Head of caudate nucleus (tissue), 42 donors: ENCODE measurements at regions of chr20 and their contacts with region 1.

Region 1: GRCh38 chr20:20568604-20569205 is 143.7 kb downstream of the RALGAPA2 start:
- DNase-seq: peak; percentile 15 to 82 (median 54)

Region 2: GRCh38 chr20:20083807-20084206 is 484.9 kb before region 1 on chr20:
- intact Hi-C with region 1: loop called (anchors 10 kb)
- DNase-seq: peak in 1 of 42 donors; percentile 6

Region 3: DNA sequence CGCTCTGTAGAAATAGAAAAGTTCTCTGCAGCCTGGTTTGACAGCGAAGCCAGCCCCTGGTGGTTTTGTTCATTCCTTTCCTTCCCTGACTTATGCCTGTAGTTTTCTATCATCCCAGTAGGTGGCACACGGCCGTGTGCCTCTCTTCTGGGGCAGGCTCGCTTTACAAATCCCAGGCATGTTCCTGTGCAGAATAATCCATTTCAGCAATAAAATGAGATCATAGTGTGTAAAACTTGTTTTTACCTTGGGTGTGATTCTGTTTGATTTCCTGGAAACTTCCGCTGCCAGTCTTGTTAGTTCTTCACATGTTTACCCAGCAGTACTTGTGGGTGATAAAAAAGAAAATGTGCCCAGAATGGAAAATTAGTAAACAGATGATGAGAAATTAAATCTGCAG is 208.2 kb before region 1 on chr20:
- intact Hi-C with region 1: loop called (anchors 2 kb)
- DNase-seq: peak in 40 of 42 donors; percentile 29 to 86 (median 60)

Region 4: GRCh38 chr20:20466341-20466879 is 102.3 kb before region 1 on chr20:
- intact Hi-C with region 1: loop called (anchors 10 kb)
- DNase-seq: no peak